ENCODE measurements at regions of chr15 and their contacts with region 1.

Region 1: DNA sequence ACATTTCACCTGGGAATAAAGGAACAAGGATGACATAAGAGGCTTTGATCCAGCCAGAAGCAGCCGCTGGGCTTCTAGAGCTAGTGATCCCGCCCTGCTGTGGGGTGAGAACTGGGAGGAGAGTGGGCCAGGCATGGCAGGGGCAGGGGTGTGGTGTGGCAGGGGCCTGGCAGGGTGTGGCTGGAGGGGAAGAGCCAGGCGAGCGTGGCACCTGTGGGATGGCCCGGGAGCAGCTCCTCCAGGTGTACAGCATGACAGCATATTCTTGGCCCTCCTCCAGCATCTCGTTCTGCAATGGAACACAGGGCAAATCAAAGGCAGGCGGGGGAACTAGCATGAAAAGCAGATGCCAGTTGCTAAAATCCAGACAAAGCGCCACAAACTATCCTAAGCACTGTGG is 35.5 kb downstream of the CYFIP1 start:
- DNase-seq: peak; percentile 86
- H3K4me3 ChIP-seq: no peak overlapping the region
- H3K27ac ChIP-seq: no peak overlapping the region
- H3K4me1 ChIP-seq: no peaks in the 10 kb centered on the region
- H3K27me3 ChIP-seq: no peaks in the 10 kb centered on the region
- CTCF ChIP-seq: no peak

Region 2: DNA sequence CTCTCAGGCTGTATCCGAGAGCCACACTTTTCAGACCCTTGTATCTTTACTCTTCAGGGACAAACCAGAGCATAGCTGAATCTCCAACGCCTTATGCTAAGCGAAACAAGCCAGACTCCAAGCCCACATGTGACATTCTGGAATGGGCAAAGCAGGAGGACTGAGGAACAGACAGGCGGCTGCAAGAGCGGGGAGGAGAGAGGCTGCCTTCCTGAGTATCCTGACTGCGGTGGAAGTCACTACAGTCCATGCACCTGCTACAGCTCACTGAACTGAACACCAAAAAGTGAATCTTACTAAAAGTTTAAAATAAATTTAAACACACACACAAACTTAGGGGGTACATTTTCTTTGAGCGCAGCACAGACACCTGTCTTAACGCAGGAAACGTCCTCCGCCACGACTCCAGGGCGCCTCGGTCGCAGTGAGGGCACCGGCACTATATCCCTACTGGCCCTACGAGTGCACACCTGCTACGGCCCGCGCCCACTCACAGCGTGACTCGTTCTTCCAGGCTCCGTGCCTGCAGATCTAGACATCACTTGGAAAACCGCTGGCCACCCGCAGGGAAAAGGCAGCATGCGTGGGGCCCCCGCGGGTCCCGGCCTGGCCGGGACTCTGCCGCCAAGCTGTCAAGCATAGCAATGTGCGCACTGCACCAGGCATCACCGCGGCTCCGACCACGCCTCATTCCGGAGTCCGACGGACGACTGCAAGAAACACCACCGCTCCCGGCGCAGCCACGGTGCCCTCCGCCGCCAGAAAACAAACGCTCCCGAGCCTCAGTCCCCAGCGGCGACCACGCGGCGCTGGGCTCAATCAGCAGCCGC is 34.3 kb after region 1 on chr15:
- intact Hi-C with region 1: loop called (anchors 5 kb)
- DNase-seq: peak; percentile 80
- H3K4me3 ChIP-seq: peak overlapping the region; percentile 85
- H3K27ac ChIP-seq: peak overlapping the region; percentile 83
- H3K4me1 ChIP-seq: peaks cover 5% of the 10 kb centered on the region
- H3K27me3 ChIP-seq: no peaks in the 10 kb centered on the region
- CTCF ChIP-seq: no peak

Measured in colonic mucosa (tissue), 4 donors.